ENCODE measurements at regions of chr10 and their contacts with region 1.

Region 1: DNA sequence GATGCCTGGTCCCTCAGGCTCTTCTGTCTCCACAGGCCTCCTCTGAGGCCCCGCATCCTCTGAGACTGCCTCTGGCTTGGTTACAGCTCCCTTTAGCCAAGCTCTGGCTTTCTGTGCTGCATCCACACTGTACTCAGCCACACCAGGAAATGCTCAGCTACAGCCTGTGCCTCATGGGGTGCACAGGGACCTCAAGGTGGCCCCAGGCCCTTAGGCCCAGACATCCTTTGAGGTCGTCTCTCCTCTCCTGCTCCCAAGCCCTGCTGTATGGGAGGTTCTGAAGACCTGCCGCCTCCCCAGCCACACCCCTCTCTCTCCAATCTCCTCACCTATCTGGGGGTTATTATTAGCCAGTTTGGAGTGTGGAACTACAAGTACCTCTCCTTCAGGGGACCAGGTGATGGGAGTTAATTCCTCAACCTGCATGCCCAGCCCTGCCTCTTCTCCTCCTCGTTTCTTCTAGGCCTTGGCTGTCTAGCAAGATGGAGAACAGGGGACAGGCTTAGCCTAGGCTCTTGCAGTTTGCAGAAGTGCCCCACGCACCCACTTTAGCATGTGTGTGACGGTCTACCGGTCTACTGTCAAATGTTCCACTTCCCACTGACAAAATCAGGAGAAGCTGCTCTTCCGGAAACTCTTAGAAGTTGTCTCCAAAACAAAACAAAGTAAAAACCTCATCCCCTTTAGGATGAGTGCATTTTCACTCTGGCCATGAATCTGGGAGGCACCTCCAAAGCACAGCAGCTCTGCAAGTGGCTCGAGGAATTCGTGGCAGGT is 64.0 kb upstream of the WAC start:
- DNase-seq: no peak
- ATAC-seq: no peak
- H3K4me3 ChIP-seq: no peak overlapping the region
- H3K27ac ChIP-seq: no peak overlapping the region
- H3K4me1 ChIP-seq: no peaks in the 10 kb centered on the region
- CTCF ChIP-seq: no peak
- EP300 ChIP-seq: no peak
- POLR2A ChIP-seq: no peak
- RAD21 ChIP-seq: no peak

Region 2: GRCh38 chr10:28425422-28425821 is 43.5 kb before region 1 on chr10:
- CTCF ChIA-PET with region 1: no interaction called
- POLR2A ChIA-PET with region 1: interaction called, 13 read pairs
- DNase-seq: no peak
- ATAC-seq: no peak
- H3K4me3 ChIP-seq: no peak overlapping the region
- H3K27ac ChIP-seq: no peak overlapping the region
- H3K4me1 ChIP-seq: no peaks in the 10 kb centered on the region
- CTCF ChIP-seq: no peak
- EP300 ChIP-seq: no peak
- POLR2A ChIP-seq: no peak
- RAD21 ChIP-seq: no peak

Region 3: DNA sequence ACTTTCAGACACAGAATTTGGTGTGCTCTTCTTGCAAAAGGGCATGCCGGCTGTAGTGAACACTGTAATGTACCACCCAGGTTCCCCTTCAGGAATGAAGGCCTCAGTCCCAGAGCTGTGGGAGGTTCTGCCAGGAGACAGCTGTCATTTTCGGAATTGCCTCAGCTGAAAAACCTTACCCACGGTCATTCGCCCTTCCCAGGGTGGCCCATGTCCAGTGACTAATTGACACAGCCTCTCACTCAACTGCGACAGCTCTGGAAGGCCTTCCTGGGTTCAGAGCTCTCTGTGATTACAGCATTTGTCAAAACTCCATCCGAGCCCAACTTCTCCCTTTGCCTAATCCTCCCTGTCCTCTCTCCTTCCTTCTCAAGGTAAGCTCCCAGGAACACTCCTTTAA is 20.3 kb after region 1 on chr10:
- CTCF ChIA-PET with region 1: no interaction called
- POLR2A ChIA-PET with region 1: no interaction called
- DNase-seq: no peak
- ATAC-seq: no peak
- H3K4me3 ChIP-seq: no peak overlapping the region
- H3K27ac ChIP-seq: no peak overlapping the region
- H3K4me1 ChIP-seq: no peaks in the 10 kb centered on the region
- CTCF ChIP-seq: no peak
- EP300 ChIP-seq: no peak
- POLR2A ChIP-seq: no peak
- RAD21 ChIP-seq: no peak

Measured in A549 (cell line).